Activated CD4-positive, alpha-beta T cell treated with anti-CD3 and anti-CD28 coated beads for 36 hours (primary cell): ENCODE measurements at regions of chr21 and their contacts with region 1.

Region 1: DNA sequence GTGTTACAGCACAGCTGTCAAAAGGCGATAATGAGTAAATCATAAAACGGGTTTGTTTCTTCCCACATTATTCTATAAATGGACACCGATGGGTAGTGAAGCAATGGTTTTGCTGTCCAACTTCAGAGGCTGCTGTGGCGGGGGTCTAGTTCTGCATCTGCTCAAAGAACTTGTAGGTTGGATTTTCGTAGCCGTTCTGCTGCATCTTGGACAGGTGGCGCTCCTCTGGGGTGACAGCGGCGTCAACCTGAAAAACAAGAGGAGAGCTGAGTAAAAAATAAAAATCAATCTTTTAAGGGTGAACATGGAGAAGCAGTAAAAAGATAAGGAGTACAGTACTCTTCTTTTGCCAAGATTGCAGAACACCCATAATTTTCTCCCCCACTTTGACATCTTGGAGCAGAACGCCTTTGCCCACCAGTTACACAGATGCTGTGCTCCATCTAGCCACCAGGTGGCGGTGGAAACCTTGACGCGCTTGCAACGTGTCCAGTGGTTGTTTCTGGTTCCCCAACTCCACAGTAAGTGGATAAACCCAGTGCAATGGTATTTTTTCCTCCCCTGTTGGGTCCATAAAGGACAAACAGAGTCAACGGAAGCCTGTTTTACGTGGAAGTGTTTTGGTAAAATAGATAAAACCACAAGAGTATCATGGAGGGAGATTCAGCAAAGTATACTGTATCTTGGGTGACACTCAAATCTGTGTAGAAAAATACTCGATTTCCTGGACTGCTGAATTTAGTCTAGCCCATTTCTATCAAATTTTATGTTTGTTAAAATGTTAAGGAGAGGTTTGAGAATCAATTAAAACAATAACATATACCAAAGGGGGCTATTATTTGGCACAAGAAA is 147.0 kb downstream of the GABPA start:
- DNase-seq: peak; percentile 74
- ATAC-seq: peak; percentile 83
- H3K4me3 Mint-ChIP-seq: no peak overlapping the region
- H3K27ac Mint-ChIP-seq: no peak overlapping the region
- H3K4me1 Mint-ChIP-seq: no peaks in the 10 kb centered on the region
- H3K27me3 Mint-ChIP-seq: no peaks in the 10 kb centered on the region

Region 2: DNA sequence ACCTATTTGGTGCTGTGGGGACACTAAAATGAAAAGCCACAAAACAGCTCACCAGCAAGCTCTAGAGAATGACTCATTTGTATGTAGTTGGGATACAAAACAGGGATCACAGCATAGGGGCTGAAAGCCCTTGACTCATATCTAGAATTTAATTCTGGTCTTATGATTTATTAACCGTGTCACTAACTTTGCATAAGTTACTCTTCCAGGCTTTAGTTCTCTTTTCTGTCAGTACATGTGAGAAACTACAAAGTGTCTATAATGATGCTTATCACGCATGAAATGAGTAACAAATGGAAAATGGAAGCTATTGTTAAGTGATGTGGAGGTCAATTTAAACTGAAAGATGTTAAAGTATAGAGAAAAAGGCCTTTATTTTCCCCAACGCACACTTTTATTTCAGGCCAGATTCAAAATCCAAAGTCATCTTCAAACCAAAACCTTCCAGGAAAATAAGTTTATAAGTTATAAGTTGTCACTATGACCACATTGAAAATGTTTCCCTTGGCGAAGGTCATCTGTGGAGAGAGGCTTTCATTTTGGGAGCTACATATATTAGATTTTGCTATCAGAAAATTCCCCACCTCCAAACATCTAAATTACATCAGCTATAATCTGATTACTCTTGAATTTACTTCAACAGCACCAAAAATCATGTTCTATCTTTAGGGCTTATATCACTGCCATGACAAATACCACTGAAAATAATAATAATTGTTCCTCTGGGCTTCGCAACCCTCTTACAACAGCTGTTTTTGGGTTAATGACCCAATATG is 704.9 kb before region 1 on chr21:
- CTCF ChIA-PET with region 1: no interaction called
- POLR2A ChIA-PET with region 1: no interaction called
- intact Hi-C with region 1: no loop called
- DNase-seq: no peak
- ATAC-seq: peak; percentile 80
- H3K4me3 Mint-ChIP-seq: no peak overlapping the region
- H3K27ac Mint-ChIP-seq: no peak overlapping the region
- H3K4me1 Mint-ChIP-seq: peaks cover 5% of the 10 kb centered on the region
- H3K27me3 Mint-ChIP-seq: no peaks in the 10 kb centered on the region

Region 3: GRCh38 chr21:25925936-25926335 is 44.2 kb after region 1 on chr21:
- CTCF ChIA-PET with region 1: no interaction called
- POLR2A ChIA-PET with region 1: no interaction called
- intact Hi-C with region 1: no loop called
- DNase-seq: no peak
- ATAC-seq: no peak
- H3K4me3 Mint-ChIP-seq: no peak overlapping the region
- H3K27ac Mint-ChIP-seq: no peak overlapping the region
- H3K4me1 Mint-ChIP-seq: no peaks in the 10 kb centered on the region
- H3K27me3 Mint-ChIP-seq: no peaks in the 10 kb centered on the region

Region 4: DNA sequence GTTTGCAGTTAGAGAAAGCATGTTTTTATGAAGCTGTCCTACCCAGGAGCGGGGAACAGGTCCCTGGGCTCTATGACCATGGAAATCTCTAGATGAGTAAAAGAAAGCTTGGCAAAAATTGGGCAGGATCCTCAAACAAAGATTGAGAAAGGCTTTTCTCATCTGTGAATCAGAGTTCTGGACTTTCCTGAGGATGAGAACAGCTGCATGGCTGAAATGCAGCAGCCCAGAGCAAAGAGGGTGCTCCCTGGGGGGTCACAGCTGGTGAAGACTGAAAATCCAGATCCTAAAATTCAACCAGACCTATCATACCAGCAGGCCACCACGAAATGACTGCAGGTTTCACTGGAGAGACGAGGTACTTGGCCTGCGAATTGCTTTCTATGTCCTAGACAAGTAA is 354.5 kb after region 1 on chr21:
- CTCF ChIA-PET with region 1: no interaction called
- POLR2A ChIA-PET with region 1: no interaction called
- intact Hi-C with region 1: no loop called
- DNase-seq: no peak
- ATAC-seq: no peak
- H3K4me3 Mint-ChIP-seq: no peak overlapping the region
- H3K27ac Mint-ChIP-seq: no peak overlapping the region
- H3K4me1 Mint-ChIP-seq: no peaks in the 10 kb centered on the region
- H3K27me3 Mint-ChIP-seq: no peaks in the 10 kb centered on the region

Region 5: DNA sequence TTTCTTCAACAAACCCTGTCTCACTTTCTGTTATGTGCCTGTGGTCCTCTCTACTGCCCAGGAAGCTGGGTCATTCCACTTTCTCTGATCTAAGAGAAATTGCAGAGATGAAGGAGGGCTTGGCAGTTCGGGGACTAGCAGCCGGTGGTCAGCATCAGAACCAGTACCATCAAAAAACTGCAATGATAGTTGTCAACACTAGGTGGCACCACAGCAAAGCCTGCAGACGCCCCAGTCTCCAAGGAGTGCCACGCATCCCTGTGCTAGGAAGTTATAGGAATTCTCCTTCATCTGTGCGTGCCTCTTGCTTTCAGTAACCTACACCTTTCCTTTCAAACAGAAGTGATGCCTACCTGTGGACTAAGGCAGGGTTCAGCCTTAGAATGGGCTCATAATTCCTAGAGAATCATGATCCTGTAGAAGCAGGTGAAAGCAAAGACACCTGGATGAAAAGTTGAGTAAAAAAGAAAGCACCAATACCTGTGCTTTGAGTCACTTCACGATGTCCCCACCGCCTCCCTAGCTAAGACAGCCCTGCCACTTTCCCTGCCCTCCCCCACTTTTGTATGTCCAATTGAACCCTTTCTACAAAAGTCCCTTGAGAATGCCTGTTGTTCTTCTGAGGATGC is 834.2 kb after region 1 on chr21:
- CTCF ChIA-PET with region 1: interaction called, 7 read pairs
- POLR2A ChIA-PET with region 1: no interaction called
- intact Hi-C with region 1: loop called (anchors 1 to 5 kb)
- DNase-seq: peak; percentile 41
- ATAC-seq: no peak
- H3K4me3 Mint-ChIP-seq: no peak overlapping the region
- H3K27ac Mint-ChIP-seq: no peak overlapping the region
- H3K4me1 Mint-ChIP-seq: peaks cover 3% of the 10 kb centered on the region
- H3K27me3 Mint-ChIP-seq: peaks cover 10% of the 10 kb centered on the region

Region 6: GRCh38 chr21:27700974-27701614 is 1819.3 kb after region 1 on chr21:
- CTCF ChIA-PET with region 1: no interaction called
- POLR2A ChIA-PET with region 1: no interaction called
- intact Hi-C with region 1: loop called in 1 of 2 experiments (anchors 10 kb)
- DNase-seq: peak; percentile 83
- ATAC-seq: peak; percentile 69
- H3K4me3 Mint-ChIP-seq: no peak overlapping the region
- H3K27ac Mint-ChIP-seq: no peak overlapping the region
- H3K4me1 Mint-ChIP-seq: no peaks in the 10 kb centered on the region
- H3K27me3 Mint-ChIP-seq: peaks cover 5% of the 10 kb centered on the region